ENCODE measurements at regions of chr5 and their contacts with region 1.

Region 1: GRCh38 chr5:96259151-96259772 is 173.8 kb downstream of the PCSK1 start:
- DNase-seq: no peak
- CTCF ChIP-seq: no peak

Region 2: GRCh38 chr5:96275051-96275450 is 15.8 kb after region 1 on chr5:
- CTCF ChIA-PET with region 1: interaction called, 14 read pairs
- POLR2A ChIA-PET with region 1: no interaction called
- DNase-seq: no peak
- CTCF ChIP-seq: no peak

Region 3: GRCh38 chr5:96483878-96484277 is 224.6 kb after region 1 on chr5:
- CTCF ChIA-PET with region 1: no interaction called
- POLR2A ChIA-PET with region 1: no interaction called
- DNase-seq: no peak
- CTCF ChIP-seq: no peak